B cell (primary cell): ENCODE measurements at regions of chr17 and their contacts with region 1.

Region 1: GRCh38 chr17:78970834-78971773 is 8.6 kb downstream of the LGALS3BP start:
- DNase-seq: peak; percentile 87
- ATAC-seq: peak; percentile 84
- H3K4me3 ChIP-seq: no peak overlapping the region
- H3K4me3 Mint-ChIP-seq: no peak overlapping the region
- H3K27ac ChIP-seq: no peak overlapping the region
- H3K27ac Mint-ChIP-seq: no peak overlapping the region
- H3K4me1 ChIP-seq: peaks cover 3 to 14% of the 10 kb centered on the region in 2 donors
- H3K4me1 Mint-ChIP-seq: peaks cover 12% of the 10 kb centered on the region
- H3K27me3 ChIP-seq: no peaks in the 10 kb centered on the region
- H3K27me3 Mint-ChIP-seq: peaks cover 3% of the 10 kb centered on the region
- CTCF ChIP-seq: peak; percentile 91

Region 2: DNA sequence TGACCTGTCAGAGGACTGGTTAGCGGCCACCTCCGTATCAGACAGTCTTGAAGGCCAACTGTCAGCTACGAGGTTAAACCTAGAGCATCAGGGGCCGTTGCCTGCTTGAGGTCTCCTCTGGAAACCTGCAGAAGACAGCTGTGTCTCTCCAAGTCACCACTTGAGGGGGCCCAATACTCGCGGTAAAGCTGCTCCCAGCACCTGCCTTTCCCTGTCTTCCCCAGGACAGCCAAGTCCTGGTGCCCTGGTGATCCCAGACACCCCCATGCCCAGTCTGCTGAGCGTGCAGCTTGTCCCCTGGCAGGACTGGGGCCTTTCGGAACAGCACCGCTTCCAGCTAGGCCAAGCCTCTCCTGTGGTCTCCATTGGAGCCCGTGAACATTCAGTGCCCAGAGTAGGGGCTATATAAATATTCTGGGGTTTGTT is 474.0 kb before region 1 on chr17:
- CTCF ChIA-PET with region 1: interaction called, 18 read pairs
- POLR2A ChIA-PET with region 1: no interaction called
- intact Hi-C with region 1: no loop called
- DNase-seq: peak; percentile 66
- ATAC-seq: peak; percentile 51
- H3K4me3 ChIP-seq: no peak overlapping the region
- H3K4me3 Mint-ChIP-seq: no peak overlapping the region
- H3K27ac ChIP-seq: no peak overlapping the region
- H3K27ac Mint-ChIP-seq: no peak overlapping the region
- H3K4me1 ChIP-seq: no peaks in the 10 kb centered on the region
- H3K4me1 Mint-ChIP-seq: no peaks in the 10 kb centered on the region
- H3K27me3 ChIP-seq: peaks cover 0 to 3% (median 0%) of the 10 kb centered on the region in 4 experiments
- H3K27me3 Mint-ChIP-seq: peaks cover 8% of the 10 kb centered on the region
- CTCF ChIP-seq: peak; percentile 60

Region 3: DNA sequence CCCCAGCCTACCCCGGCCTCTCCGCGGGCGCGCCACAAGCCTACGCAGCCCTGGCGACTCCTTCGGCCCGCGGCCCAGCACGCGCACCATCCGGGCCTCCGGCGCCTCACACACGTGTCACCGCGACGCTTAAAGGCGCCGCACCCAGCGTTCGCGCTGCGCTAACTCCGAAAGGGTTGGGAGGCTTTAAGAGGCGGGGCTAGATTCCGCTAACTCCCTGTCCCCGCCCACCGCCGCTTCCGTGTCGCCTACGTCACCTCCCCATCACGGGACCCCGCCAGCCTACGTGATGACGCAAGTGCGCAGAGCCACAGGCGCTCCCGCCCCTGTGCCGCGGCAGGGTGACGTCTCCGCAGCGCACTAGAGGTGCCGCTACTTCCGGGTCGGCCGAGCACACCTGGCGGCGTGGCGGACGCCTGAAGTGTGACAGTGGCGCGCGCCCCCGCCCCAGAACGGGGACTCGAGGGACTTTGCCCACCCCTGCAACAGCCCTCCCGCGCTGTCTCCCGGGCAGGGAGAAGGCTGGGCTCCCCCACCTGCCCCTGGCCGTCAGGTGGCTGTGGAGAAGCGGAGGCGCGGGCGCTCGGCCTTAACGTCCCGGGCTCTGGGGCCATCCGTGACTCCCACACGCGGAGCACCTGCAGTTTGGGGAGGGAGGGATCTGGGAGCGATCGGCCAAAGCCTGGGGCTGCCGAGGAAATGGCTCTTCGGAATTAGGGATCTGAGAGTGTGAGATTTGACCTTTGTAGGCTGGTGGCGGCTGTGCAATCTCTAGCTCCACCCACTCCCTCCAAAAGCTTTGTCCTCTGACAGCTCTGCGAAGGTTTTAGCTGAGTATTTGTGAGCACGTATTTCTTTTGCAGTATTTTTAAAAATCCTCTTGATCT is 130.1 kb before region 1 on chr17 and contains the start of gene USP36:
- CTCF ChIA-PET with region 1: interaction called, 12 read pairs
- POLR2A ChIA-PET with region 1: interaction called, 3 read pairs
- intact Hi-C with region 1: loop called (anchors 1 kb)
- DNase-seq: peak; percentile 100
- ATAC-seq: peak; percentile 85
- H3K4me3 ChIP-seq: peak within 1 kb of the TSS; percentile 74 to 85 (median 83)
- H3K4me3 Mint-ChIP-seq: peak within 1 kb of the TSS; percentile 91
- H3K27ac ChIP-seq: peak within 1 kb of the TSS; percentile 99 to 100
- H3K27ac Mint-ChIP-seq: peak within 1 kb of the TSS; percentile 98
- H3K4me1 ChIP-seq: peaks cover 21 to 24% of the 10 kb centered on the region in 2 donors
- H3K4me1 Mint-ChIP-seq: peaks cover 37% of the 10 kb centered on the region
- H3K27me3 ChIP-seq: no peaks in the 10 kb centered on the region
- H3K27me3 Mint-ChIP-seq: no peaks in the 10 kb centered on the region
- CTCF ChIP-seq: no peak
- total RNA-seq, gene USP36: 137 and 145 TPM in 2 replicates

Region 4: DNA sequence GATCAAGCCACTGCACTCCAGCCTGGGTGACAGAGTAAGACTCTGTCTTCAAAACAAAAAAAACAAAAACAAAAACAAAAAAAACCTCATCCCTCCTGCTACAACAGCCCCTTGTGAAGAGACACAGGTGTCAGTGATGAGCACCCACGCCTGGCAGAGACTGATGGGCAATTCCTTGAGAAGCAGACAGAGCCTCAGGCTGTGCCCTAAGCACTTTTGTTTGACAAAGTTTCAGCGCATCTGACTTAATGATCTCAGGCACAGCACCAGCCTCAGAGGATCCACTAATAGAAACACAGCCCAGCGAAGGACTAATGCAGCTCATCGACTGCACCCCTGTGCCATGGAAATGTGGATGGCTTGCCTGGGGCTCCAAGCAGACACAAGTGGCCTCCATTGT is 111.0 kb before region 1 on chr17:
- CTCF ChIA-PET with region 1: interaction called, 119 read pairs
- POLR2A ChIA-PET with region 1: no interaction called
- intact Hi-C with region 1: no loop called
- DNase-seq: no peak
- ATAC-seq: no peak
- H3K4me3 ChIP-seq: no peak overlapping the region
- H3K4me3 Mint-ChIP-seq: no peak overlapping the region
- H3K27ac ChIP-seq: no peak overlapping the region
- H3K27ac Mint-ChIP-seq: no peak overlapping the region
- H3K4me1 ChIP-seq: no peaks in the 10 kb centered on the region
- H3K4me1 Mint-ChIP-seq: no peaks in the 10 kb centered on the region
- H3K27me3 ChIP-seq: no peaks in the 10 kb centered on the region
- H3K27me3 Mint-ChIP-seq: peaks cover 7% of the 10 kb centered on the region
- CTCF ChIP-seq: no peak

Region 5: DNA sequence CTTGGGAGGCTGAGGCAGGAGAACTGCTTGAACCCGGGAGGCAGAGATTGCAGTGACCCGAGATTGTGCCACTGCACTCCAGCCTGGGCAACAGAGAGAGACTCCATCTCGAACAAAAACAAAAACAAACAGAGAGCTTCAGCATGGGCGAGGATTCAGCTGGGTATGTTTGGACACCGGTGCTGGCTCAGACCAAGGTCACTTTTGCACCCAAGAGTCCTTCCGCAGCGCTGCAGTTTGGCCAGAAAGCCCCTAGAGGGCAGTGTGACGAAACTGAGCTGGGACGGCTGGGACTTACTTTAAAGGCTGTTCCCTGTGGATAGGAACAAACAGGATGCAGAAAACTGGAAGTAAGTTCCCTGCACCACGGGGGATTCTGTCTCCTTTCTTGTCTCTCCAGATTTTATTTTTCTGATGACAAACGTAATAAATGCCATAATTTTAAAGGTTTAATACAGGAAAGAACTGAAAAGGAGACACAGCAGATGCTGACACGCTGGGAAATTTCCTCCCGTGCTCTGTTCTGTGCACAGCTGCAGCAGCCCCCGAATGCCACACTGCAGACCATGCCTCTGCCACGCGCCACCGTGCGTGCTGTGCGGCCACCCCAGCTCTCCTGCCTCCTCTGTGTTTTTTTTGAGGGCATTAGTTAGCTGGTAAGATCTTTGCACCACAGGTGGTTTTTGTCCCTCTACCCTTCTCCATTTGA is 105.3 kb before region 1 on chr17:
- CTCF ChIA-PET with region 1: interaction called, 119 read pairs
- POLR2A ChIA-PET with region 1: no interaction called
- intact Hi-C with region 1: no loop called
- DNase-seq: peak; percentile 76
- ATAC-seq: peak; percentile 72
- H3K4me3 ChIP-seq: no peak overlapping the region
- H3K4me3 Mint-ChIP-seq: no peak overlapping the region
- H3K27ac ChIP-seq: no peak overlapping the region
- H3K27ac Mint-ChIP-seq: no peak overlapping the region
- H3K4me1 ChIP-seq: no peaks in the 10 kb centered on the region
- H3K4me1 Mint-ChIP-seq: no peaks in the 10 kb centered on the region
- H3K27me3 ChIP-seq: no peaks in the 10 kb centered on the region
- H3K27me3 Mint-ChIP-seq: peaks cover 7% of the 10 kb centered on the region
- CTCF ChIP-seq: peak; percentile 92

Region 6: DNA sequence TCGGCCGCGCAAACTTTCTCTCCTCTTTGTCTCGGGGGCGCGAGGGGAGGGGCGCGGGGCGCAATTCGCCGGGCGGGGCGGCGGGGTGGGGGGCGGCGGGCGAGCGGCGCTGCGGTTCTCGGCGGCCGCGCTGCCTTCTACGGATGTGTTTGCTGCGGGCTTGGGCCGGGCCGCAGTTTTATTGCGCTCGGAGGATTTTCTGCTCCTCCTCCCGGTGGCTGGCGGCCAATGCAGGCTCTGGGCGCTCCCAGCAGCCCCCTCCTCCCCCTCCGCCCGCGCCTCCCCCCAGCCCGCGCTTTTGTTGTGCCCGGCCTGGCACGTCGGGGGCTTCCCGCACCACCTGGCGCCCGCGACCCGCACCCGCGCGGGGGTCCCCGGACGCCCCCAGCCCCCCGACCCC is 45.9 kb before region 1 on chr17 and contains the start of gene TIMP2:
- CTCF ChIA-PET with region 1: no interaction called
- POLR2A ChIA-PET with region 1: interaction called, 21 read pairs
- intact Hi-C with region 1: no loop called
- DNase-seq: peak; percentile 86
- ATAC-seq: peak; percentile 78
- H3K4me3 ChIP-seq: peak within 1 kb of the TSS; percentile 60 to 70 (median 66)
- H3K4me3 Mint-ChIP-seq: peak within 1 kb of the TSS; percentile 88
- H3K27ac ChIP-seq: no peak within 1 kb of the TSS
- H3K27ac Mint-ChIP-seq: peak within 1 kb of the TSS; percentile 15
- H3K4me1 ChIP-seq: peaks cover 15 to 27% of the 10 kb centered on the region in 2 donors
- H3K4me1 Mint-ChIP-seq: peaks cover 13% of the 10 kb centered on the region
- H3K27me3 ChIP-seq: peaks cover 0 to 8% (median 2%) of the 10 kb centered on the region in 4 experiments
- H3K27me3 Mint-ChIP-seq: peaks cover 11% of the 10 kb centered on the region
- CTCF ChIP-seq: peak; percentile 66
- total RNA-seq, gene TIMP2: 10.0 and 11.4 TPM in 2 replicates